HCT116 (cell line): ENCODE measurements at regions of chr7 and their contacts with region 1.

Region 1: GRCh38 chr7:12458520-12459131 is 55.0 kb upstream of the VWDE start:
- DNase-seq: peak; percentile 23
- ATAC-seq: peak; percentile 100
- H3K4me3 ChIP-seq: no peak overlapping the region
- H3K27ac ChIP-seq: no peak overlapping the region
- H3K4me1 ChIP-seq: peaks cover 0 to 2% of the 10 kb centered on the region in 2 experiments; a peak in 2 of 4 replicates
- H3K27me3 ChIP-seq: no peaks in the 10 kb centered on the region
- CTCF ChIP-seq: peak; percentile 67 to 82 (median 71); a peak in 5 of 6 replicates
- POLR2A ChIP-seq: no peak
- RAD21 ChIP-seq: peak; percentile 82

Region 2: DNA sequence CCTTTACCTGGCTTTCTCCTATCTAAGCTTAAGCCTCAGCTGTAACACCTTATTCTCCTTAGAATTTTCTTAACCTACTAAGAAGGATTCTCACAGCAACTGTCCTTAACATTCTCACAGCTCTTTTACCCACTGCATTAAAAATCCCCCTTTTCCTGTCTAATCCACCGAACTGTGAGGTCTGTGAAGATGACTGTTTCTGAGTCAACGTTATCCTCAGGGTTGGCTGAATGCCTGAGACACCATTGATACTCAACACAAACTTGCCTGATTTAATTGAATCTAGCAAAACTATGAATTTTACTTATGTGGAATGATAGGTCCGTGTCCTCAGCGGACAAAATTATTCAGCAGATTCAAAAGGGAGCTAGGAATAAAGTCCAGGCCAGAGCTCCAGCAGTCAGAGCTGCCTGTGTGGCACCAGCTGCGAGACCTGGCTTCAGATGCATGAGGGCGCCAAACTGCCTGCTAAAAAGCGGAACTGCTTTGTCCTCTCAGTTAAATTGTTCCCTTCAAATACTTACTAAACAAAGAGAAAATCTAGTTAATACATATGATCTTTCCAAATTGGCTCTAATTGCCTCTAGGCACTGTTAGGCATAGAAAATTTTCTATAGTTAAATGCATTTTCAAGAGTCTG is 21.6 kb before region 1 on chr7:
- CTCF ChIA-PET with region 1: interaction called, 25 read pairs
- POLR2A ChIA-PET with region 1: no interaction called
- RAD21 ChIA-PET with region 1: interaction called in 1 of 2 experiments, 3 read pairs
- intact Hi-C with region 1: no loop called
- DNase-seq: no peak
- ATAC-seq: peak; percentile 90
- H3K4me3 ChIP-seq: no peak overlapping the region
- H3K27ac ChIP-seq: no peak overlapping the region
- H3K4me1 ChIP-seq: peaks cover 0 to 7% of the 10 kb centered on the region in 2 experiments; a peak in 1 of 4 replicates
- H3K27me3 ChIP-seq: no peaks in the 10 kb centered on the region
- CTCF ChIP-seq: peak; percentile 11 to 49 (median 32); a peak in 3 of 6 replicates
- POLR2A ChIP-seq: no peak
- RAD21 ChIP-seq: peak; percentile 49

Region 3: DNA sequence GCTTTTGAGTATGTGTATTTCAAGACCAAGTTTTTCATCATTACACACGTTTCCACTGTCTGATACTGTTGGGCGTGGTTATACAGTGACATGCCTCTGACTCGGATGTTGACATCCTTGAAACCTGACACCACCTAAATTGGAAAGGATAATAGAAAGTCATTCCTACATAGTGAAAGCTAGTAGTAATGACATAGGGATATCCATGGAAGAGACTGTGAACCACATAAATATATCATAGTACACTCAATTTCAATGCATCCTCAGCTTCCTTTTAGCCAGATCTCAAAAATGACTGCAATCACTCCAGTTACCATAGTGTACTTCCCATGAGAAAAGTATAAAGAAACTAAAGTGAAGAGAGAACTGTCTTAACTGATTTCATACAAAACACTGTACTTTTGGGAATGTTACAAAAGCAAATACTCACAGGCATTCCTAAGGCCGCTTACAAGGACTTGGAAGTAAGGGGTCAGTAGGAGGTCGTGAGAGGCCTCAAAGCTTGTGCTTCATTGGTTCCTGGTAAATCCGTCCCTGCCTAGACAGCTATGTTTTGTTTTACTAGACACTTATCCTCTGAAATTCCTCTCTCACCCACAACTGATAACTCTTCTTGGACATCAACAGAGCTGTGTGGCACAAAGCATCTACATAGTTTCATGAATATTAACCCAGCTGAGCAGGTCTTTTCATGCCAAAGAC is 16.9 kb after region 1 on chr7:
- CTCF ChIA-PET with region 1: interaction called, 14 read pairs
- POLR2A ChIA-PET with region 1: no interaction called
- RAD21 ChIA-PET with region 1: interaction called in 1 of 2 experiments, 3 read pairs
- intact Hi-C with region 1: loop called (anchors 1 kb)
- DNase-seq: peak; percentile 23
- ATAC-seq: peak; percentile 68
- H3K4me3 ChIP-seq: no peak overlapping the region
- H3K27ac ChIP-seq: no peak overlapping the region
- H3K4me1 ChIP-seq: peaks cover 0 to 9% of the 10 kb centered on the region in 2 experiments; a peak in 2 of 4 replicates
- H3K27me3 ChIP-seq: no peaks in the 10 kb centered on the region
- CTCF ChIP-seq: no peak
- POLR2A ChIP-seq: no peak
- RAD21 ChIP-seq: no peak

Region 4: GRCh38 chr7:12518920-12519681 is 60.5 kb after region 1 on chr7:
- CTCF ChIA-PET with region 1: interaction called, 15 read pairs
- POLR2A ChIA-PET with region 1: no interaction called
- RAD21 ChIA-PET with region 1: interaction called, 3 to 4 read pairs
- intact Hi-C with region 1: no loop called
- DNase-seq: no peak
- ATAC-seq: peak; percentile 97
- H3K4me3 ChIP-seq: no peak overlapping the region
- H3K27ac ChIP-seq: no peak overlapping the region
- H3K4me1 ChIP-seq: no peaks in the 10 kb centered on the region
- H3K27me3 ChIP-seq: no peaks in the 10 kb centered on the region
- CTCF ChIP-seq: peak; percentile 30 to 74 (median 71); a peak in 4 of 6 replicates
- POLR2A ChIP-seq: no peak
- RAD21 ChIP-seq: no peak; the same call in 1 of the 2 replicates

Region 5: GRCh38 chr7:12524794-12525386 is 66.3 kb after region 1 on chr7:
- CTCF ChIA-PET with region 1: interaction called, 15 read pairs
- POLR2A ChIA-PET with region 1: no interaction called
- RAD21 ChIA-PET with region 1: interaction called in 1 of 2 experiments, 4 read pairs
- intact Hi-C with region 1: no loop called
- DNase-seq: peak; percentile 60
- ATAC-seq: peak; percentile 61
- H3K4me3 ChIP-seq: no peak overlapping the region
- H3K27ac ChIP-seq: no peak overlapping the region
- H3K4me1 ChIP-seq: peaks cover 0 to 4% of the 10 kb centered on the region in 2 experiments; a peak in 1 of 4 replicates
- H3K27me3 ChIP-seq: no peaks in the 10 kb centered on the region
- CTCF ChIP-seq: peak; percentile 38 to 73 (median 63); a peak in 5 of 6 replicates
- POLR2A ChIP-seq: no peak
- RAD21 ChIP-seq: peak; percentile 81

Region 6: GRCh38 chr7:12584930-12585329 is 126.3 kb after region 1 on chr7:
- CTCF ChIA-PET with region 1: no interaction called
- POLR2A ChIA-PET with region 1: no interaction called
- RAD21 ChIA-PET with region 1: no interaction called
- intact Hi-C with region 1: no loop called
- DNase-seq: no peak
- ATAC-seq: no peak
- H3K4me3 ChIP-seq: no peak overlapping the region
- H3K27ac ChIP-seq: no peak overlapping the region
- H3K4me1 ChIP-seq: no peaks in the 10 kb centered on the region
- H3K27me3 ChIP-seq: no peaks in the 10 kb centered on the region
- CTCF ChIP-seq: no peak
- POLR2A ChIP-seq: no peak
- RAD21 ChIP-seq: no peak

Region 7: DNA sequence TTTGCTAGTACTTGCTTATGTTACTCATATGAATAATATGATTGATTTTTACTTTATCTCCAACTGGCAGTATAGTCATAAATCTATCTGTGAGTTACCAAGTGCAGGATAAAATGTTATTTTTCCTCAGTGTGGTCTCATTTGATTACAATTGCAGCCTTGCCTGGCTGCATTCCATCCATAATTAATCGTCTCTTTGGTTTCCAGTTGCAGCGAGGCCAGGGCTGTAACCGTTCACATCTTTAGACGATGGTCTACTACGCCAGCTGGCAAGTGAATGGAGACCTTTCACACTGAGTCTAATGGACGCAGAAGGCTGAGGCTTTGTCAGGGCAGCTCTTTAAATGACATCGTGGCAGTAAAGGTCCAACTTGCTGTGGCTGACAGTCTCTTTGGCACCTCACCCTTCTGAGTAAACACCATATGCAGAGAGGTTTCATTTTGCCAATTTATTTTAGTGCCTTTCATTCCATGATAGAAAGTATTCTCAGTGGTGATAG is 312.8 kb after region 1 on chr7:
- CTCF ChIA-PET with region 1: no interaction called
- POLR2A ChIA-PET with region 1: no interaction called
- RAD21 ChIA-PET with region 1: no interaction called
- intact Hi-C with region 1: no loop called
- DNase-seq: no peak
- ATAC-seq: no peak
- H3K4me3 ChIP-seq: no peak overlapping the region
- H3K27ac ChIP-seq: no peak overlapping the region
- H3K4me1 ChIP-seq: no peaks in the 10 kb centered on the region; a peak in 1 of 4 replicates
- H3K27me3 ChIP-seq: no peaks in the 10 kb centered on the region
- CTCF ChIP-seq: no peak
- POLR2A ChIP-seq: no peak
- RAD21 ChIP-seq: no peak